Motor neuron (in vitro differentiated cells): ENCODE measurements at regions of chr3 and their contacts with region 1.

Region 1: GRCh38 chr3:45037734-45038455 is 11.8 kb downstream of the CLEC3B start:
- ATAC-seq: peak; percentile 53 to 94 (median 76)
- H3K4me3 ChIP-seq: no peak overlapping the region
- H3K27ac ChIP-seq: no peak overlapping the region
- H3K4me1 ChIP-seq: peaks cover 5 to 6% of the 10 kb centered on the region in 2 donors

Region 2: DNA sequence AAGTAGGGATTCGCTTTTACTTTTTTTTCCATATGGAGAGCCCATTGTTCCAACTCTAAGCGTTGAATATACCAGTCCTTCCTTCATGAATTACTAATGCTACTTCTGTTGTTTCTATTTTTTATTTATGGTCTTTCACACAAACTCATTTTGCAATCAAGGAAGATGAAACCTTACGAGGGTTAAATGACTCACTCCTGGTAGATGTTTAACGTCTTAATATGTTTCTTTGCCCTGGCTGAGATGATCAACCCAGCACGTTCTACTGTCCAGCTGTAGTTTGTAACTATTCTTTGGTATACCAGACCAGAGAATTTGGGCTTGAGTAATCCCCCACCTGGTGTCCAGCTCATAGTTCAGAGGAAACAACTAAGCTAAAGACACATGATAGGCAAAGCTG is 85.1 kb after region 1 on chr3:
- in situ Hi-C with region 1: no loop called
- ATAC-seq: peak in 1 of 8 experiments; percentile 9
- H3K4me3 ChIP-seq: no peak overlapping the region
- H3K27ac ChIP-seq: no peak overlapping the region
- H3K4me1 ChIP-seq: no peaks in the 10 kb centered on the region

Region 3: DNA sequence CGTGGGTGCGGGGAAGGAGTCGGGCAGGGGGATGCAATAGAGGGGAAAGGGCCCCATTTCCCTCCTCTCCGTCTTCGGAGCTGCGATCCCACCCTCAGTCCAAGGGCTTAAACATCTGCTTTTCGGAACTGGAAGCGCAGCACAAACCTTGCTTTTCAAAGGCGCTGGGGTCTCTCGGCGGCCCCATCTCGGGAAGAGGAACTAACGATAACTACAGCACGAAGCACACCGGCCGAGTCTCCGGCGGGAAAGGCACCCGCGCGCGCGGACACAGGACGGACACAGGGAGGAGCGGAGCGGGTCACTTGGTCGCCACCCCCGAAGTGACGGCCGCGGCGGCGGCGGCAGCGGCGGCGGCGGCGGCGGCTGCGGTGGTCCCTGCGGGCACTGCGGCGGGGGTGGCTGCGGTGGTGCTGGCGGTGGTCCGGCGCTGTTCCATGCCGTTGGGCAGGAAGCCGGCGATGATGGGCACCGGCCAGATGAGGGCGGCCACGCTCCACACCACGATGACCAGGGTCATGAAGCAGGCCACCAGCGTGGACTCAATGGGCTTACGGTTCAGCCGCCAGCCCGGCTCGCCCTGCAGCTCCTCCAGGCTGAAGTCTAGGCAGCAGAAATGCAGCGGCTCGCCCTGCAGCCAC is 187.0 kb after region 1 on chr3:
- in situ Hi-C with region 1: loop called in 3 of 9 experiments (anchors 25 kb)
- ATAC-seq: peak; percentile 74 to 85 (median 79)
- H3K4me3 ChIP-seq: peak overlapping the region; percentile 51 to 94 (median 57)
- H3K27ac ChIP-seq: no peak overlapping the region
- H3K4me1 ChIP-seq: peaks cover 13 to 22% of the 10 kb centered on the region in 2 donors

Region 4: DNA sequence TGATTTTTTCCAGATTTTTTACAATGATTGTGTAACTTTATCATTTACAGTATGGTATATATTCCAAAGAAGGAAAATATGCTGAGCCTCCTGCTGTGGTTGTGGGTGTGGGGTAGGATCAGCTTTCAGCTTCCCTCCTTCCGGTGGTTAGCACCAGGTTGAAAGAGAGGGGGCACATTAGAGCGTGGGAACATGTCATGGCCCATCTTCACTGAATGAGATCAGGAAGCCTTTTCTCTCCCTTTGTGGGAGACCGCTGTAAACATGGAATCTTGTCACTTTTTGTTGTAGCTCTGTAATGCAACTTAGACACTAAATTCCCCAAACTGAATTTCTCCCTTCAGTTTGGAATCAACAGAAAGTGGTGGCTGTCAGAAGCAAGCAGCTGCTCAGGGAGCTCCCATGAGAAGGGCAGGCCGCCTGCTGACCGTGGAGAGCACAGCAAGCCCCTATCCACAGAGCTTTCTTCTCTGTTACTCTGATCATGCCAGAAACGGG is 470.0 kb after region 1 on chr3:
- in situ Hi-C with region 1: loop called in 3 of 9 experiments (anchors 10 to 25 kb)
- ATAC-seq: peak in 7 of 8 experiments; percentile 3 to 70 (median 33)
- H3K4me3 ChIP-seq: no peak overlapping the region
- H3K27ac ChIP-seq: peak overlapping the region; percentile 71 to 73
- H3K4me1 ChIP-seq: peaks cover 24 to 30% of the 10 kb centered on the region in 2 donors

Region 5: DNA sequence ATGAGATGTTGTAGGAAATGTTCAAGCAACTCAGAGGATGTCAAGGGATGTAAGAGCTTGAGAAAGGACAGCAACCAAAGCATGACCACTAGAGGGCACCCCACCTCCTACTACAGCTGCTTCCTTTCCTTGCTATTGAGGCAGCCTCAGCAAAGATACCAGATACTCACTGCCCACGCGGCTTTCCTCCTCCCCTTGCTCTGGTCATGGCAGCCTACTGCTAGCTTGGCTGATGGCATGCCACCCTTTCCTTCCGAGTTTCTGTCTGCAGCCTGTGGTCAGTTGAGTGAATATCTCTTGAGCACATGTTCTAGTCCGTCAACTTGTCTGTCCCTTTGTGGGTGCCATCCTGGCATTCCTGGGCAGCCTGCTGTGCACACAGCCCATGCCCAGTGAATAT is 901.0 kb after region 1 on chr3:
- in situ Hi-C with region 1: loop called in 1 of 9 experiments (anchors 25 kb)
- ATAC-seq: peak; percentile 66 to 97 (median 87)
- H3K4me3 ChIP-seq: no peak overlapping the region
- H3K27ac ChIP-seq: peak overlapping the region in 1 of 2 donors; percentile 31
- H3K4me1 ChIP-seq: peaks cover 0 to 2% of the 10 kb centered on the region in 2 donors